ENCODE measurements at regions of chr4 and their contacts with region 1.

Region 1: DNA sequence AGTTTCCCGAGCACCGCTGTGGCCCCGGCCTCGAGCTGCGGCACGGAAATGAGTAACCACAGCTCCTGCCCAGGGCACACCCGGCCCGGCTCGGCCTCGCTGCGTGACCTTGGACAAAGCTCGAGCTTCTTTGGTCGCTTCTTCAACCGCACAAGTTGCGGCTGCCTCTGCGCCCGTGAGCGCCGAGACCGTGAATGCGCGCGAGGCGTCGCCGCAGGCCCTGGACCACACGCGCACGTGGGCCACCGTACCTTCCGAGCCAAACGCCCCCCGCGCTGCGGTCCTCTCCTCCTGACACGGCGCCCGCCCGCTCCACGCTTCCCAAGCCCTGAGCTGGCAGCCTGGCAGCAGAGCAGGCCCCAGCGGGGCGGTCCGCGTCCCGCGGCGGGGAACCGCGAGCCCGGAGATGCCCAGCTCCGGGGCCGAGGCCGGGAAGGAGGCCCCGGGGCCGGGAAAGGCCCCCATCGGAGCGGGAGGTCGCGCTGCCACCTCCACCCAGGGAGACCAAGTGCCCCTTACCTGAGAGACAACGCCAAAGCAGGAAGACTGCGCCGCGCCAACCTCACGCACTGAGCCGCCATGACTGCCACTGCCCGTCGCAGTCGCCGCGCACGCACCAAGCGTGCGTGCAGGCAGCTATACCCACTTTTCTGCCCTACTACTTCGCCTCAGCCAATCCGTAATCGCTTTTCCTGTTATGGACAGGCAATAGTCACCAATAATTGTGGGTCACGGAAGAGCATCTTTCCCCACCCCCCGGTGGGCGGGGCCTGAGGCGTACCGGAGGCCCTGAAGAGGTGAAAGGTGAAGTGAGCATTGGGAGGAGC is at the start of gene GRPEL1:
- DNase-seq: peak; percentile 99
- H3K4me3 ChIP-seq: peak within 1 kb of the TSS; percentile 77
- H3K4me3 Mint-ChIP-seq: peak within 1 kb of the TSS; percentile 90
- H3K27ac Mint-ChIP-seq: peak within 1 kb of the TSS; percentile 87
- H3K4me1 ChIP-seq: peaks cover 9% of the 10 kb centered on the region; the same call in 1 of the 2 replicates
- H3K4me1 Mint-ChIP-seq: peaks cover 14% of the 10 kb centered on the region
- H3K27me3 ChIP-seq: no peaks in the 10 kb centered on the region
- H3K27me3 Mint-ChIP-seq: no peaks in the 10 kb centered on the region
- CTCF ChIP-seq: no peak
- total RNA-seq, gene GRPEL1: 47.3 and 51.7 TPM in 2 replicates

Region 2: GRCh38 chr4:6892190-6892908 is 175.3 kb before region 1 on chr4:
- CTCF ChIA-PET with region 1: no interaction called
- POLR2A ChIA-PET with region 1: interaction called, 3 read pairs
- intact Hi-C with region 1: loop called (anchors 5 kb)
- DNase-seq: peak; percentile 69 to 76
- H3K4me3 ChIP-seq: no peak overlapping the region
- H3K4me3 Mint-ChIP-seq: peak overlapping the region; percentile 34
- H3K27ac Mint-ChIP-seq: peak overlapping the region; percentile 89
- H3K4me1 ChIP-seq: peaks cover 33% of the 10 kb centered on the region
- H3K4me1 Mint-ChIP-seq: peaks cover 25% of the 10 kb centered on the region
- H3K27me3 ChIP-seq: no peaks in the 10 kb centered on the region
- H3K27me3 Mint-ChIP-seq: no peaks in the 10 kb centered on the region
- CTCF ChIP-seq: peak in 1 of 2 experiments; percentile 30

Region 3: GRCh38 chr4:6974138-6974848 is 93.4 kb before region 1 on chr4:
- CTCF ChIA-PET with region 1: interaction called, 10 read pairs
- POLR2A ChIA-PET with region 1: no interaction called
- intact Hi-C with region 1: loop called (anchors 1 kb)
- DNase-seq: peak; percentile 77 to 86
- H3K4me3 ChIP-seq: no peak overlapping the region
- H3K4me3 Mint-ChIP-seq: no peak overlapping the region
- H3K27ac Mint-ChIP-seq: no peak overlapping the region
- H3K4me1 ChIP-seq: peaks cover 18% of the 10 kb centered on the region
- H3K4me1 Mint-ChIP-seq: peaks cover 15% of the 10 kb centered on the region
- H3K27me3 ChIP-seq: no peaks in the 10 kb centered on the region
- H3K27me3 Mint-ChIP-seq: no peaks in the 10 kb centered on the region
- CTCF ChIP-seq: peak; percentile 84 to 91

Region 4: DNA sequence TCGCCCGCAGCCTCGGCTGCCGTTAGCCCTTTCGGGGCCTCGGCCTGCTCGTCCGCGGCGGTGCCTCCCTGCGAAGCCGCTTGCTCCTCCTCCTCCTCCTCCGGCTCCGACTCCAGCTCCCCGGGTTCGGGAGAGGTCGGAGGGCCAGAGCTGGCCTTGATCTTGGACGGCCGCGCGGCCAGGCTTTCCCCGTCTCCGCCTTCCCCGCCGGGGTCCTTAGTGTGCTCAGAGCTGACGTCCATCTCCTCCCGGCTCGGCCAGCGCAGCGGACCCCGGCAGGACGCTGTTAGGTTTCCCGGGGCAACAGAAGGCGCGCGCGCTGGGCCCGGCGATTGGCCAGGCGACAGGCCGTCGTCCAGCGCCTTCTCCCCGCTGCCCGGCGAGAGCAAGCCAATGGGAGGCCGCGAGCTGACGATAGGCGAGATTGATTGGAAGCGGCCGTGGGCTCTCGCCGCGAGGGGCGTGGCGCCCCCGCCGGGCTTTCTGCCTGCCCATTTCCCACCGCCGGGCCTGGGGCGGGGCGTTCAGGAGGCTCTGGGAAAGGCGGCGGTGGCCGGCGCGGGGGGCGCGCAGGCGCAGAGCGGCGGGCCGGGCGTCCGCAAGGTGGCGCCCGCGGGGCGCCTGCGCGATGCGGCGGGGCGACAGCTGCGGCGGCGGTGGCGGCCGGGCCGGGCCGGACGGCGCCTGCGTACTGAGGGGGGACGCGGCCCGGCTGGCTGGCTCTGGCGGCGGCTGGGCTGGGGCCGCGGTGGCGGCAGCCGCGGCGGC is 24.8 kb before region 1 on chr4 and contains the start of gene TADA2B:
- CTCF ChIA-PET with region 1: interaction called, 30 read pairs
- POLR2A ChIA-PET with region 1: interaction called, 27 read pairs
- intact Hi-C with region 1: loop called (anchors 1 kb)
- DNase-seq: peak; percentile 96 to 98
- H3K4me3 ChIP-seq: peak within 1 kb of the TSS; percentile 98
- H3K4me3 Mint-ChIP-seq: peak within 1 kb of the TSS; percentile 82
- H3K27ac Mint-ChIP-seq: peak within 1 kb of the TSS; percentile 39
- H3K4me1 ChIP-seq: peaks cover 4% of the 10 kb centered on the region; the same call in 1 of the 2 replicates
- H3K4me1 Mint-ChIP-seq: peaks cover 26% of the 10 kb centered on the region
- H3K27me3 ChIP-seq: no peaks in the 10 kb centered on the region
- H3K27me3 Mint-ChIP-seq: no peaks in the 10 kb centered on the region
- CTCF ChIP-seq: no peak
- total RNA-seq, gene TADA2B: 17.2 and 21.8 TPM in 2 replicates

Region 5: GRCh38 chr4:7101692-7102515 is 34.2 kb after region 1 on chr4:
- CTCF ChIA-PET with region 1: interaction called, 6 read pairs
- POLR2A ChIA-PET with region 1: no interaction called
- intact Hi-C with region 1: loop called (anchors 2 kb)
- DNase-seq: peak; percentile 75 to 77
- H3K4me3 ChIP-seq: peak overlapping the region; percentile 57
- H3K4me3 Mint-ChIP-seq: peak overlapping the region; percentile 83
- H3K27ac Mint-ChIP-seq: no peak overlapping the region
- H3K4me1 ChIP-seq: peaks cover 11% of the 10 kb centered on the region
- H3K4me1 Mint-ChIP-seq: peaks cover 5% of the 10 kb centered on the region
- H3K27me3 ChIP-seq: no peaks in the 10 kb centered on the region
- H3K27me3 Mint-ChIP-seq: peaks cover 1% of the 10 kb centered on the region
- CTCF ChIP-seq: peak; percentile 58 to 71